Activated B cell treated with CpG ODN at 0.5 μM for 24 hours (primary cell): ENCODE measurements at regions of chr5 and their contacts with region 1.

Region 1: DNA sequence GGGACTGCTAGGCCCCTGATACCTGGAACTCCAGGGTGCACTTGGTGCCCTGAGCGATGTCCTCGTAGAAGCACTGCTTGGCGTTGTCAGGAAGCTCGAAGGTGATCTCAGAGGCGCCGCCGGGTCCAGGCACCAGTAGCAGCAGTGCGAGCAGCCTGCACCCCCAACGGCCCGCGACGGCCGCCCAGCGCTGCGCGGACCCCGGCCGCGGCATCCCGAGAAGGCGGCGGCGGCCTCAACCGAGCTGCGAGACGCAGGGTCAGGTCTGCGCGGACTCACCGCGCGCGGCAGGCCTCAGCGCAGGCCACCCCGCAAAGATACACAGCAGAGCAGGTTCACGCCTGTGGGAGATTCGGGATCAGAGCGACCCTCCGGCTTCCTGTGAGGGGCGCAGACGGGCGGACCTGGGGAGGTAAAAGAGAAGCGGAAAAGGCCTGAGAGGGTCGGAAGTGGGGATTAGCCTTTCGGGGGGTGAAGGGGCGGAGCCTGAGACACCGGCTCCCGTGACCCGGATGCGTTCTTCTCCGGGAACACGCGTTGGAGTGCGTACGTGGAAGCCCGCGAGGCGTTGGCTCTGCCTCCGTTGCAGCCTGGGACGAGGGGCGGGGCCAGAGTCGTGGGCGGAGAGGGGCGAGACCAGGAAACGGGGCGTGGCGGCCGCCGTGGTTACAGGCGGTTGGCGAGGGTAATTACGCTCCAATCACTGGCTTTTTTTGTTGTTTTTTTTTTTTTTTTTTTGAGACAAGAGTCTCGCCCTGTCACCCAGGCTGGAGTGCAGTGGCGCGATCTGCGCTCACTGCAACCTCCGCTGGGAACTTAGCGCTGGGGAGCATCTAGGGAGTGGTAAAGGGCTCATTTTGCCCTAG is at the start of gene TMED7:
- DNase-seq: peak; percentile 99
- ATAC-seq: peak; percentile 92
- H3K4me3 Mint-ChIP-seq: no peak within 1 kb of the TSS
- H3K27ac Mint-ChIP-seq: peak within 1 kb of the TSS; percentile 93
- H3K4me1 Mint-ChIP-seq: peaks cover 29% of the 10 kb centered on the region
- H3K27me3 Mint-ChIP-seq: no peaks in the 10 kb centered on the region
- CTCF ChIP-seq: no peak
- total RNA-seq, gene TMED7: 34.9 and 35.0 TPM in 2 replicates

Region 2: GRCh38 chr5:115296124-115297022 is 329.4 kb before region 1 on chr5 and contains the start of gene CCDC112:
- CTCF ChIA-PET with region 1: no interaction called
- POLR2A ChIA-PET with region 1: interaction called, 3 read pairs
- intact Hi-C with region 1: loop called (anchors 2 kb)
- DNase-seq: peak; percentile 64
- ATAC-seq: peak; percentile 83
- H3K4me3 Mint-ChIP-seq: peak within 1 kb of the TSS; percentile 85
- H3K27ac Mint-ChIP-seq: peak within 1 kb of the TSS; percentile 47
- H3K4me1 Mint-ChIP-seq: peaks cover 13% of the 10 kb centered on the region
- H3K27me3 Mint-ChIP-seq: no peaks in the 10 kb centered on the region
- CTCF ChIP-seq: no peak
- total RNA-seq, gene CCDC112: 5.2 and 5.3 TPM in 2 replicates

Region 3: GRCh38 chr5:115579747-115580173 is 46.1 kb before region 1 on chr5:
- CTCF ChIA-PET with region 1: no interaction called
- POLR2A ChIA-PET with region 1: interaction called, 4 read pairs
- intact Hi-C with region 1: loop called (anchors 1 kb)
- DNase-seq: no peak
- ATAC-seq: peak; percentile 85
- H3K4me3 Mint-ChIP-seq: peak overlapping the region; percentile 74
- H3K27ac Mint-ChIP-seq: peak overlapping the region; percentile 83
- H3K4me1 Mint-ChIP-seq: peaks cover 50% of the 10 kb centered on the region
- H3K27me3 Mint-ChIP-seq: no peaks in the 10 kb centered on the region
- CTCF ChIP-seq: no peak

Region 4: DNA sequence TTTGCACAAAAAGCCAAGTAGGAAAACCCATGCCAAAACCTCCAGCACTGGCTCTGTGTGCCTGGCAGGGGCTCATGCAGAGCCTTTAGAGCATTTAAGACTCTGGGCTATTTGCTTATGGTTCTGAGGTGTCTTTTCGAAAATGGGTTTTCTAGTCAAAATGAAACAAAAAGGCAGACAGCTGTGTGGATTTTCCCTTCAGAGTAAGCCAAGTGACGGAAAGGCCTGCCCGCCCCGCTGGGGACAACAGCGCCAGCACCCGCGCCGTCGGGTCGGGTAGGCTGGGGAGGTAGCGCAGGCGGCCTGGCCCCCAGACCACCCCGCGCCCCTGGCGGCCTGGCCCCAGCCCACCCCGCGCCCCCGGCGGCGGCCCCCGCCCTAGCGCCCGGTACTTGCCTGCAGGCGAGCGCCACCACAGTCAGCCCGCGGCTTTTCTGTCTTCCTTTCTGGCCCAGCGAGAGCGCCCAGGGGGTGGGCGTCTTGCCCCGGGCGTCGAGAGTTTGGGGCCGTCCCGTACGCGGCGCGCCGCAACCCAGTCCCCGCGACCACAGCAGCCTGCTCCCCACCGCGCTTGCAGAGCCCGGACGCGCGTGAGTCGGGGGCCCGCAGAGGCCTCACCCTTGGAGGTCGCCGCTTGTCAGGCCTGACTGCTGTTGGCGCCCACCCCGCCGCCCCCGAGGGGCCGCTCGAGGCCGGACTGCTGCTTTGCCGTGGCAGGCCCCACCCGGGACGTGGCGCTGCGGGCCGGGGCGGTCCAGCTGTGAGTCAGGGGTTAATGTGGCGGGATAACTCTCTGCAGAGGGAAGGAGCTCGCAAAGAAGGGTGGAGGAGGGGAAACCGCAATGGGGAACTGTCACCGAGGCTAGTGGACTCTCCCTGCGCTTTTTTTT is 23.9 kb before region 1 on chr5 and contains the start of gene TICAM2:
- CTCF ChIA-PET with region 1: no interaction called
- POLR2A ChIA-PET with region 1: interaction called, 46 read pairs
- intact Hi-C with region 1: loop called (anchors 1 kb)
- DNase-seq: peak; percentile 68
- ATAC-seq: peak; percentile 80
- H3K4me3 Mint-ChIP-seq: peak within 1 kb of the TSS; percentile 88
- H3K27ac Mint-ChIP-seq: peak within 1 kb of the TSS; percentile 98
- H3K4me1 Mint-ChIP-seq: peaks cover 56% of the 10 kb centered on the region
- H3K27me3 Mint-ChIP-seq: no peaks in the 10 kb centered on the region
- CTCF ChIP-seq: no peak
- total RNA-seq, gene TICAM2: 12.4 and 13.3 TPM in 2 replicates

Region 5: GRCh38 chr5:116076496-116076895 is 450.7 kb after region 1 on chr5:
- CTCF ChIA-PET with region 1: no interaction called
- POLR2A ChIA-PET with region 1: no interaction called
- intact Hi-C with region 1: loop called (anchors 2 kb)
- DNase-seq: no peak
- ATAC-seq: peak; percentile 95
- H3K4me3 Mint-ChIP-seq: peak overlapping the region; percentile 76
- H3K27ac Mint-ChIP-seq: peak overlapping the region; percentile 88
- H3K4me1 Mint-ChIP-seq: peaks cover 29% of the 10 kb centered on the region
- H3K27me3 Mint-ChIP-seq: no peaks in the 10 kb centered on the region
- CTCF ChIP-seq: no peak

Region 6: GRCh38 chr5:116084871-116085715 is 459.3 kb after region 1 on chr5 and contains the start of gene COMMD10:
- CTCF ChIA-PET with region 1: no interaction called
- POLR2A ChIA-PET with region 1: interaction called, 4 read pairs
- intact Hi-C with region 1: loop called (anchors 1 kb)
- DNase-seq: peak; percentile 72
- ATAC-seq: peak; percentile 91
- H3K4me3 Mint-ChIP-seq: peak within 1 kb of the TSS; percentile 95
- H3K27ac Mint-ChIP-seq: peak within 1 kb of the TSS; percentile 96
- H3K4me1 Mint-ChIP-seq: peaks cover 36% of the 10 kb centered on the region
- H3K27me3 Mint-ChIP-seq: no peaks in the 10 kb centered on the region
- CTCF ChIP-seq: no peak
- total RNA-seq, gene COMMD10: 35.7 and 44.4 TPM in 2 replicates